K562 (cell line): ENCODE measurements at regions of chr12 and their contacts with region 1.

Region 1: GRCh38 chr12:53267999-53268647 is at the start of gene ESPL1:
- DNase-seq: peak; percentile 90 to 95 (median 92)
- ATAC-seq: peak; percentile 93
- H3K4me3 ChIP-seq: peak within 1 kb of the TSS; percentile 64
- H3K27ac ChIP-seq: peak within 1 kb of the TSS; percentile 79
- H3K4me1 ChIP-seq: peaks cover 24 to 43% of the 10 kb centered on the region in 2 experiments; a peak in 4 of 5 replicates
- H3K27me3 ChIP-seq: no peaks in the 10 kb centered on the region
- CTCF ChIP-seq: peak; percentile 65 to 69 (median 65)
- EP300 ChIP-seq: 0 out of 2 replicates have a peak, but pooled peaks have one; percentile 9
- POLR2A ChIP-seq: peak; percentile 64
- RAD21 ChIP-seq: peak; percentile 51 to 65
- polyA plus RNA-seq, gene ESPL1: 1.2 to 1.6 TPM

Region 2: DNA sequence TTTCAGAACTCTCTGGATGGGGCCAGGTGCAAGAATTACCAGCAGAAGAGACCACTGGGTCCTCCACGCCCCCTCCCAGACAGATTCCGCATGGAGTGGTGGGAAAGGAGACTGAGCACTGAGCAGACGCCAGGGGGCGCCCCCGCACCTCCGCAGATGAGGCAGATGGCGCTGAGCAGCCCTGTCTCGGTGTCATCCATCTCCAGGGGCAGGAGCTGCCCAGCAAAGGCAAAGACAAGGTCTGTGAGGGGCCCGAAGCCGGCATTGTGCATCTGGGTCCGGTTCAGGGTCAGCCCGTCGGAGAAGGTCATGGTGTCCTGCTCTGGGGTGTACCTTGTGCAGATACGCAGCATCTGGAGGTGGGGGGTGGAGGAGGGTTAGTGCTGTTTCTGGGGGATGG is 54.8 kb before region 1 on chr12:
- CTCF ChIA-PET with region 1: interaction called, 5 read pairs
- POLR2A ChIA-PET with region 1: interaction called, 6 read pairs
- in situ Hi-C with region 1: no loop called
- intact Hi-C with region 1: loop called (anchors 1 kb)
- DNase-seq: peak; percentile 79 to 87 (median 83)
- ATAC-seq: peak; percentile 94
- H3K4me3 ChIP-seq: no peak overlapping the region
- H3K27ac ChIP-seq: no peak overlapping the region
- H3K4me1 ChIP-seq: peaks cover 20 to 38% of the 10 kb centered on the region in 2 experiments
- H3K27me3 ChIP-seq: no peaks in the 10 kb centered on the region
- CTCF ChIP-seq: peak; percentile 96 to 97 (median 97)
- EP300 ChIP-seq: no peak
- POLR2A ChIP-seq: no peak
- RAD21 ChIP-seq: peak; percentile 98 to 99

Region 3: DNA sequence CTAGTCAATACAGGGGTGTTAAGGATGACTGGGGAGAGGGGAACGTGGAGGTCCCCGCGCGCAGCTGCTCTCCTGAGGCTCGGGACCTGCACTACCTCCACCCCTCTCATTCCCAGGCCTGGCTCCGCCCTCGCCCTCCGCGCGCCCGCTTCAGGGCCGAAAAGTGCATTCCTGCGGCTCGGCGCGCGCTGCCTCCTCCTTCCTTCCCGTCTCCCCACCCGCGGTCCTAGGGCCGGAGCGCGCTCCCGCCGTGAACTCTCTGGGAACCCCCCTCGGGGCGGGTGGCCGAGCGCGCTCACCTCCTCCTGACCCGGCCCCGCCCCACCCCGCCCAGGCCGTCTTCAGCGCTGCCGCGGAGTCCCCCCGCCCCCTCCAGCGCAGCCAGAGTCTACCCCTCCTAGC is 47.3 kb before region 1 on chr12:
- CTCF ChIA-PET with region 1: interaction called, 4 read pairs
- POLR2A ChIA-PET with region 1: interaction called, 5 read pairs
- in situ Hi-C with region 1: no loop called
- intact Hi-C with region 1: loop called (anchors 2 kb)
- DNase-seq: peak; percentile 95 to 96 (median 96)
- ATAC-seq: peak; percentile 86
- H3K4me3 ChIP-seq: peak overlapping the region; percentile 64
- H3K27ac ChIP-seq: peak overlapping the region; percentile 99
- H3K4me1 ChIP-seq: peaks cover 50 to 79% of the 10 kb centered on the region in 2 experiments
- H3K27me3 ChIP-seq: no peaks in the 10 kb centered on the region
- CTCF ChIP-seq: no peak
- EP300 ChIP-seq: no peak
- POLR2A ChIP-seq: no peak
- RAD21 ChIP-seq: no peak

Region 4: DNA sequence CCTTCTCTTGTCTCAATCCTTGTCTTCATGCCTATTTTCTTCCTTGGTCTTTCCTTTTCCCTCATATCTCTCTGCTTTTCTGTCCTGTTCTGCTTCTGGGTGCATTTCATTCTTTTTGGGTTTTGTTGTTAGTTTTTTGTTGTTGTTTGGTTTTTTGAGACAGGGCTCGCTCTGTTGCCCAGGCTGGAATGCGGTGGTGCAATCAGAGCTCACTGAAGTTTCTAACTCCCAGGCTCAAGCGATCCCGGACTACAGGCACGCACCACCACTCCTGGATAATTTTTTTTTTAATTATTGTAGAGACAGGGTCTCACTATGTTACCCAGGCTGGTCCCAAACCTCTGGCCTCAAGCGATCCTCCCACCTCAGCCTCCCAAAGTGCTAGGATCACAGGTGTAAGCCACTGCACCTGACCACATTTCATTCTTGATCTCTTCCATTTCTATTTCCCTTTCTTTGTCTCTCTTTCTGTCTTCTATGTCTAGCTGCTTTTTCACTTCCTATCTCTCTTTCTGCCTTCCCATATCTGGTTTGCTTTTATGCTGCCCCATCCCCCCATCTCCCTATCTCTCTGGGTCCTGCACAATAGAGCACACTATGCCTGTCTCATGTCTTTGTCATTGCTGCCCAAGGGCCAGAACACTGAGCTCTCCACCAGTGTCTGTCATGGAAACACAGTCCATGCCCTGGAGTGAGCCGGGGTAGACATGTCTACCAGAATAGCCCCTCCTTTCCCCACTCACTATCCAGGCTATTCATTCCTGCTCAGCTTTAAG is 24.0 kb before region 1 on chr12:
- CTCF ChIA-PET with region 1: no interaction called
- POLR2A ChIA-PET with region 1: interaction called, 10 read pairs
- in situ Hi-C with region 1: no loop called
- intact Hi-C with region 1: no loop called
- DNase-seq: peak; percentile 52 to 79 (median 60)
- ATAC-seq: peak; percentile 78
- H3K4me3 ChIP-seq: no peak overlapping the region
- H3K27ac ChIP-seq: peak overlapping the region; percentile 43
- H3K4me1 ChIP-seq: peaks cover 14 to 24% of the 10 kb centered on the region in 2 experiments; a peak in 4 of 5 replicates
- H3K27me3 ChIP-seq: no peaks in the 10 kb centered on the region
- CTCF ChIP-seq: no peak
- EP300 ChIP-seq: peak; percentile 48; the same call in 1 of the 2 replicates
- POLR2A ChIP-seq: 0 out of 2 replicates have a peak, but pooled peaks have one; percentile 20
- RAD21 ChIP-seq: no peak

Region 5: GRCh38 chr12:53251477-53252348 is 16.4 kb before region 1 on chr12:
- CTCF ChIA-PET with region 1: no interaction called
- POLR2A ChIA-PET with region 1: interaction called, 14 read pairs
- in situ Hi-C with region 1: no loop called
- intact Hi-C with region 1: no loop called
- DNase-seq: peak; percentile 85 to 94 (median 94)
- ATAC-seq: peak; percentile 91
- H3K4me3 ChIP-seq: peak overlapping the region; percentile 96
- H3K27ac ChIP-seq: peak overlapping the region; percentile 71
- H3K4me1 ChIP-seq: peaks cover 23 to 29% of the 10 kb centered on the region in 2 experiments; a peak in 4 of 5 replicates
- H3K27me3 ChIP-seq: no peaks in the 10 kb centered on the region
- CTCF ChIP-seq: peak; percentile 66 to 73 (median 71)
- EP300 ChIP-seq: peak; percentile 2; the same call in 1 of the 2 replicates
- POLR2A ChIP-seq: peak; percentile 79
- RAD21 ChIP-seq: peak; percentile 59 to 79

Region 6: DNA sequence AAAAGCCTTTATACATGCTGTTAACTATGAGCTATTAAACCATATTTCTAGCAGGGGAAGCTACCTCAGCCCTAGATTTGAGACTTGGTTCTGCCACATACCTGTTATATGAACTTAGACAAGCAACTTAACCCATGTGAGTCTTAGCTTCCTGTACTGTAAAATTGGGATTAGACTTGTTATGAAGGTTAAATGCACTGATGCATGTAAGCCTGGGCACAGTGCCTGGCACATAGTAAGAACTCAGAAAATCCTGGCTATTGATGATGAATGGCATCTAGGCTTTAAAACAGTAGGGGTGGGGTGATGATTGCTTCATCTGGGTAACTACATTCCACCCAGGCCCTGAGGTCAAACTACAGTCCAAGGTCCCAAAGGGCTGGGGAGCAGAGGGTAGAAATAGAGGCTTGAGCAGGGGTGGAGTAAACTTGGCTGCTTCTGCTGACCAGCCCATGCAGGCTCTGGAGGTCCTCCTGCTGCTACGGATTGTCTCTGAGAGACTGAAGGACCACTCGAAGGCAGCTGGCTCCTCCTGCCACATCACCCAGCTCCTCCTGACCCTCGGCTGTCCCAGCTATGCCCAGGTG is 11.3 kb after region 1 on chr12:
- CTCF ChIA-PET with region 1: no interaction called
- POLR2A ChIA-PET with region 1: interaction called, 22 read pairs
- in situ Hi-C with region 1: no loop called
- intact Hi-C with region 1: no loop called
- DNase-seq: no peak
- ATAC-seq: no peak
- H3K4me3 ChIP-seq: no peak overlapping the region
- H3K27ac ChIP-seq: no peak overlapping the region
- H3K4me1 ChIP-seq: no peaks in the 10 kb centered on the region
- H3K27me3 ChIP-seq: no peaks in the 10 kb centered on the region
- CTCF ChIP-seq: no peak
- EP300 ChIP-seq: no peak
- POLR2A ChIP-seq: no peak
- RAD21 ChIP-seq: no peak

Region 7: GRCh38 chr12:53287741-53288216 is 19.7 kb after region 1 on chr12:
- CTCF ChIA-PET with region 1: no interaction called
- POLR2A ChIA-PET with region 1: interaction called, 10 read pairs
- in situ Hi-C with region 1: no loop called
- intact Hi-C with region 1: no loop called
- DNase-seq: peak; percentile 67 to 78 (median 74)
- ATAC-seq: peak; percentile 96
- H3K4me3 ChIP-seq: no peak overlapping the region
- H3K27ac ChIP-seq: no peak overlapping the region
- H3K4me1 ChIP-seq: peaks cover 0 to 6% of the 10 kb centered on the region in 2 experiments; a peak in 1 of 5 replicates
- H3K27me3 ChIP-seq: no peaks in the 10 kb centered on the region
- CTCF ChIP-seq: peak; percentile 79 to 89 (median 83)
- EP300 ChIP-seq: no peak
- POLR2A ChIP-seq: no peak
- RAD21 ChIP-seq: peak; percentile 89 to 93

Region 8: GRCh38 chr12:53308276-53308675 is 40.2 kb after region 1 on chr12:
- CTCF ChIA-PET with region 1: no interaction called
- POLR2A ChIA-PET with region 1: no interaction called
- in situ Hi-C with region 1: no loop called
- intact Hi-C with region 1: no loop called
- DNase-seq: no peak
- ATAC-seq: no peak
- H3K4me3 ChIP-seq: no peak overlapping the region
- H3K27ac ChIP-seq: peak overlapping the region; percentile 70; the same call in 2 of the 3 replicates
- H3K4me1 ChIP-seq: peaks cover 14 to 17% of the 10 kb centered on the region in 2 experiments; a peak in 4 of 5 replicates
- H3K27me3 ChIP-seq: no peaks in the 10 kb centered on the region
- CTCF ChIP-seq: no peak
- EP300 ChIP-seq: no peak
- POLR2A ChIP-seq: no peak
- RAD21 ChIP-seq: no peak

Region 9: DNA sequence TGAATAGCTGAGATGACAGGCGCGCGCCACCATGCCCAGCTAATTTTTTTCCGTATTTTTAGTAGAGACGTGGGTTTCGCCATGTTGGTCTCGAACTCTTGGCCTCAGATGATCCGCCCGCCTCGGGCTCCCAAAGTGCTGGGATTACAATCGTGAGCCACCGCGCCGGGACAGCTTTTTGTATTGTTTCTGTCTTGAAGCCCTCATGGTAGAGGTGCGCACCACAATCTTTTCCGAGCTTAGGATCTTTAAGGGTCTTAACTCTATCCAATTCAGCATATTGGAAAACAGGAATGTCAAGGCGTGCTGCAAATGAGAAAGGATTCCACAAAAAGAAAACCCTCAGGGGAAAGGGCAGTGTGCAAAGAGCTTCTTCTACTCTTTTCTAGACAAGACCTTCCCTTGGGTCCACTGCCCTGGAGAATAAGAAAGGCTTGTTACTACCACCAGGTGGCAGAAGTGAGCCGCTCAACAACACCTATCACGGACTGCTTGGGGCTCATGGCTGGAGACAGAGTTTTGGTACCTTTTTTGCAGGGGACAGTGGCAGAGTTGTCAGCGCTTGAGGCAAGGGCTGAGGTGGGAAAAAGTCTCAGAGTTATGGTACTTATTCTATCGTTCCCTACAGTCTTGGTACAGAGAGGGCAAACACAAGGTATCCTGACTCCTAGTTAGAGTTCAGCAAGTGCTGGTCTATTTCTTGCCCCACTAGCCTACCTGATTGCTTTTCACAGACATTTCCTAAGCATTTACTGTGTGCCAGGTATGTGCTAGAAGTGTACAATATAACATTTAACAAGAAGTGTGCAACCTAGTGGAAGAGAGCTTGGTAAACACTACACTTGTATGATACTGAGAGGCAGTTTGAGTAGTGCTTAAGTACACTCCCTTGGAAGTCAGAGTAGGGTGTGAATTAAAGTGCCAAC is 84.5 kb after region 1 on chr12:
- CTCF ChIA-PET with region 1: no interaction called
- POLR2A ChIA-PET with region 1: no interaction called
- in situ Hi-C with region 1: no loop called
- intact Hi-C with region 1: no loop called
- DNase-seq: peak; percentile 71 to 93 (median 74)
- ATAC-seq: peak; percentile 95
- H3K4me3 ChIP-seq: no peak overlapping the region
- H3K27ac ChIP-seq: no peak overlapping the region
- H3K4me1 ChIP-seq: peaks cover 12 to 17% of the 10 kb centered on the region in 2 experiments
- H3K27me3 ChIP-seq: no peaks in the 10 kb centered on the region
- CTCF ChIP-seq: peak; percentile 91 to 96 (median 92)
- EP300 ChIP-seq: no peak
- POLR2A ChIP-seq: no peak
- RAD21 ChIP-seq: peak; percentile 98 to 99